B cell (primary cell): ENCODE measurements at regions of chr2 and their contacts with region 1.

Region 1: DNA sequence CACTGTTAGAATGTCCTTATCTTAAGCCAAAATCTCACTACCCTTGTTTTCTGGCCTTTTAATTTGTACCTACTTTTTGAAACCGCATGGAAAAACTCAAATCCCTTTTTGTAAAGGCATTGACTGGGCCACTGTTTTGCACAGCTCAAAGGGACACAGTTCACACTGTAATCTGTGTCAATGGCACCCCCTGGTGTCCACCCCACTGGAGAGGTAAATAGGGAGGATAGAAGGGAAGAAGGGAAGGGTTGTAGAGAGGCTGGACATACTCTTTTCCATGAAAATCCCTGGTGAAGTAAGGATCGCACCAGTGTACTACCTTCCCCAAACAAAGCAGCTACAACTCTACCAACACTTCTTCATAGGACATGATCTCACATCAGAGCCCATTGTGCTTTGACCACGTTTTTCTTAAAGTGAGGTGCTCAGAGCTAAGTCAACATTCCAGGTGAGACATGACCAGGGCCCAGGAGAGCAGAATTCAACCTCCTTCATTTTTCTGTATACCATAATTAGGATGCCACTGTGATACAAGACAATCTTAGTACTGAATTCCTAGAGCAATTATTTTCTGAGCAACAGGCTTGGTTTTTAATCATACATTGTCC is 92.4 kb upstream of the RMDN2 start:
- DNase-seq: peak; percentile 82
- ATAC-seq: peak; percentile 94
- H3K4me3 ChIP-seq: no peak overlapping the region
- H3K4me3 Mint-ChIP-seq: no peak overlapping the region
- H3K27ac ChIP-seq: no peak overlapping the region
- H3K27ac Mint-ChIP-seq: no peak overlapping the region
- H3K4me1 ChIP-seq: no peaks in the 10 kb centered on the region
- H3K4me1 Mint-ChIP-seq: peaks cover 2% of the 10 kb centered on the region
- H3K27me3 ChIP-seq: no peaks in the 10 kb centered on the region
- H3K27me3 Mint-ChIP-seq: no peaks in the 10 kb centered on the region
- CTCF ChIP-seq: peak; percentile 93

Region 2: DNA sequence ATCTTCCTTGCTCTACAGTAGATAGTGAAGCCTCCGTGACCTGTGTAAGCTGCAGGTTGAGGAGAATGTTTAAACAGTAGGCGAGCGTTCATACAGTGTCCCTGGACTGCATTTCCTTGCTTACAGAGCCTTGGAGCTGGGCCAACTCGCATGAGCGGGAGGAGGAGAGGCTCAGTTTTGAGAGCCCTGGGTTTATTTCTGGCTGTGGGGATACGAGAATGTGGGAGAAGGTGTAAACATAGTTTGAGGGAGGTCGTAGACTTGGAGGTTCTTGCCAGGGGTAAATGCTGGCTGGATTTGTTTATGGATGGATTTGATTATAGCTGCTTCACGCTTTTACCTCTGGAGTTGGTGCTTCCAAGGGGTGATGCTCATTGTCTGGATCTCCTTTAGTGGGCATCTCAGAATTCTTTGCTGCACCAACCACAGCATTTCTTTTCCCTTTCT is 1456.4 kb before region 1 on chr2:
- CTCF ChIA-PET with region 1: no interaction called
- POLR2A ChIA-PET with region 1: no interaction called
- intact Hi-C with region 1: no loop called
- DNase-seq: no peak
- ATAC-seq: no peak
- H3K4me3 ChIP-seq: no peak overlapping the region
- H3K4me3 Mint-ChIP-seq: no peak overlapping the region
- H3K27ac ChIP-seq: no peak overlapping the region
- H3K27ac Mint-ChIP-seq: no peak overlapping the region
- H3K4me1 ChIP-seq: peaks cover 0 to 10% of the 10 kb centered on the region in 2 donors
- H3K4me1 Mint-ChIP-seq: no peaks in the 10 kb centered on the region
- H3K27me3 ChIP-seq: no peaks in the 10 kb centered on the region
- H3K27me3 Mint-ChIP-seq: peaks cover 11% of the 10 kb centered on the region
- CTCF ChIP-seq: no peak

Region 3: DNA sequence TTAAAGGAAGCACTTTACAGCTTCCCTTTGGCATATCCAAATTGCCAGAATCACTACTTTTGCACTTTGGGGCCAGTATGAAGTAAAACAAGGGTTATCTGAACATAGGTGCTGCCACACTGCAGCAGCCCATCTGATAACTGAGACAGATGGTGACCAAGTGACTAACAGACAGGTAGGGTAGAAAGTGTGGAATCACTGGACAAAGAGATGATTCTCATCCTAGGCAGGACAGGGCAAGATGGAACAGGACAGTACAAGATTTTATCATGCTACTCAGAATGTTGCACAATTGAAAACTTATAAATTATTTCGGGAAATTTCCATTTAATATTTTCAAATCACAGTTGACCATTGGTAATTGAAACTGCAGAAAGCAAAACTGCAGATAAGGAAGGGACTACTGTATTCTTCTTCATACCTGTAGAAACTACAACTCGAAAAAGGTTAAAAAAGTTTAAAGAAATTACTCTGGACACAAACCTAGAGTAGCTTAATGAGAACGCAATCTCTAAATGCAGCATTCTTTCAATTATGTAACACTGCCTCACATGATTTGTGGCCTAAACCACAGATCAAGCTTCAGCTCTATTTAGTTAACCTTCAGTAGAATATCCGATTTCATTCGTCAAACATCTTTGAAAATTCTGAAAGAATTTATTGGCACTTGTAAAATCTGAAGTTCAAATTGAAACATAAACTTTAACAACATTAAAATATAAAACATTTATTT is 779.9 kb before region 1 on chr2:
- CTCF ChIA-PET with region 1: no interaction called
- POLR2A ChIA-PET with region 1: no interaction called
- intact Hi-C with region 1: no loop called
- DNase-seq: no peak
- ATAC-seq: no peak
- H3K4me3 ChIP-seq: no peak overlapping the region
- H3K4me3 Mint-ChIP-seq: no peak overlapping the region
- H3K27ac ChIP-seq: no peak overlapping the region
- H3K27ac Mint-ChIP-seq: no peak overlapping the region
- H3K4me1 ChIP-seq: no peaks in the 10 kb centered on the region
- H3K4me1 Mint-ChIP-seq: no peaks in the 10 kb centered on the region
- H3K27me3 ChIP-seq: no peaks in the 10 kb centered on the region
- H3K27me3 Mint-ChIP-seq: no peaks in the 10 kb centered on the region
- CTCF ChIP-seq: no peak

Region 4: DNA sequence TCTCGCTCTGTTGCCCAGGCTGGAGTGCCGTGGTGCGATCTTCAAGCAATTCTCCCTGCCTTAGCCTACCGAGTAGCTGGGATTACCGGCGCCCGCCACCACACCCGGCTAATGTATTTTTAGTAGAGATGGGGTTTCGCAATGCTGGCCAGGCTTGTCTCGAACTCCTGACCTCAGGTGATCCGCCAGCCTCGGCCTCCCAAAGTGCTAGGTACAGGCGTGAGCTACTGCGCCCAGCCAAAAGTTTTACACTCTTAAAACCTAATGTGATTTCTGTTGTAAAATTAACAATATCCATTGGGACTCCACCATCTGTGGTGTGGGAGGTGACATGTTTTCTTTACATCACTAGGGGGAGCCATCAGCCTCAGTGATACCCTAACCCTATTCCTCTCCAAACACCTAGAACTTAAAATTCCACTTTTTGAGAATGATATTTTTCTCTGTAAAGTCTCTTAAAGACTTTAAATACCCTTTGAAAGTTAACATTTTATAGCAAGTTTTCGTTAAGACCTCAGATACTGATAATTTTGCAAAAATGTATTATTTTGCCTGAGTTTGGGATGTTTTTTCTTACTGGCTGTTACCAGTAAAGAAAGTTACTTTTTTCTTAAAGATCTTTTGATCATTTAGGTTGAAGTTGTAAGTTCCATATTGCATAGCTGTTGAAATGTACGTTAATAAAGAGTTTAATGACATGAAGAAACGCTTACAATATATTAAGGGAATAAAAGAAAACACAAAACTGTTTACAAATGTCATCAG is 664.3 kb before region 1 on chr2:
- CTCF ChIA-PET with region 1: interaction called, 23 read pairs
- POLR2A ChIA-PET with region 1: no interaction called
- intact Hi-C with region 1: loop called (anchors 1 kb)
- DNase-seq: peak; percentile 59
- ATAC-seq: peak; percentile 64
- H3K4me3 ChIP-seq: no peak overlapping the region
- H3K4me3 Mint-ChIP-seq: no peak overlapping the region
- H3K27ac ChIP-seq: no peak overlapping the region
- H3K27ac Mint-ChIP-seq: no peak overlapping the region
- H3K4me1 ChIP-seq: no peaks in the 10 kb centered on the region
- H3K4me1 Mint-ChIP-seq: peaks cover 2% of the 10 kb centered on the region
- H3K27me3 ChIP-seq: no peaks in the 10 kb centered on the region
- H3K27me3 Mint-ChIP-seq: no peaks in the 10 kb centered on the region
- CTCF ChIP-seq: peak; percentile 83

Region 5: GRCh38 chr2:37376421-37377186 is 456.1 kb before region 1 on chr2:
- CTCF ChIA-PET with region 1: interaction called, 24 read pairs
- POLR2A ChIA-PET with region 1: no interaction called
- intact Hi-C with region 1: no loop called
- DNase-seq: peak; percentile 81
- ATAC-seq: peak; percentile 74
- H3K4me3 ChIP-seq: peak overlapping the region in 4 of 5 experiments; percentile 5 to 36 (median 30)
- H3K4me3 Mint-ChIP-seq: peak overlapping the region; percentile 83
- H3K27ac ChIP-seq: peak overlapping the region; percentile 72 to 74
- H3K27ac Mint-ChIP-seq: peak overlapping the region; percentile 90
- H3K4me1 ChIP-seq: peaks cover 42 to 45% of the 10 kb centered on the region in 2 donors
- H3K4me1 Mint-ChIP-seq: peaks cover 43% of the 10 kb centered on the region
- H3K27me3 ChIP-seq: no peaks in the 10 kb centered on the region
- H3K27me3 Mint-ChIP-seq: no peaks in the 10 kb centered on the region
- CTCF ChIP-seq: no peak

Region 6: DNA sequence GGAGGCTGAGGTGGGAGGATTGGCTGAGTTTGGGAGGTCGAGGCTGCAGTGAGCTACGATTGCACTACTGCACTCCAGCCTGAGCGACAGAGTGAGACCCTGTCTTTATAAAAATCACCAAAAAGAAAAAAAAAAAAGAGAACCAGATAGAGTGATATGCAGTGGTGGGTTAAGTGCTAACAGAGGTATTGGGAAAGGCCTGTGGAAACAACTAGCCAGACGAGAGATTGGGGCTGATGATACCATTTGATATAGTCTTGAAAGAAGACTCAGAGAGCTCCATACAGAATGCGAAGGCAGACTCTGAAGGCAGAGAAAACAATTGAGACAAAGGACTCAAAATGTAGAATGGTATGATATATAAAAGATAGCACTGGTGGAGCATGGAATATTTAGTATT is 295.4 kb before region 1 on chr2:
- CTCF ChIA-PET with region 1: interaction called, 19 read pairs
- POLR2A ChIA-PET with region 1: no interaction called
- intact Hi-C with region 1: no loop called
- DNase-seq: no peak
- ATAC-seq: no peak
- H3K4me3 ChIP-seq: no peak overlapping the region
- H3K4me3 Mint-ChIP-seq: no peak overlapping the region
- H3K27ac ChIP-seq: no peak overlapping the region
- H3K27ac Mint-ChIP-seq: no peak overlapping the region
- H3K4me1 ChIP-seq: no peaks in the 10 kb centered on the region
- H3K4me1 Mint-ChIP-seq: peaks cover 4% of the 10 kb centered on the region
- H3K27me3 ChIP-seq: no peaks in the 10 kb centered on the region
- H3K27me3 Mint-ChIP-seq: peaks cover 6% of the 10 kb centered on the region
- CTCF ChIP-seq: no peak

Region 7: DNA sequence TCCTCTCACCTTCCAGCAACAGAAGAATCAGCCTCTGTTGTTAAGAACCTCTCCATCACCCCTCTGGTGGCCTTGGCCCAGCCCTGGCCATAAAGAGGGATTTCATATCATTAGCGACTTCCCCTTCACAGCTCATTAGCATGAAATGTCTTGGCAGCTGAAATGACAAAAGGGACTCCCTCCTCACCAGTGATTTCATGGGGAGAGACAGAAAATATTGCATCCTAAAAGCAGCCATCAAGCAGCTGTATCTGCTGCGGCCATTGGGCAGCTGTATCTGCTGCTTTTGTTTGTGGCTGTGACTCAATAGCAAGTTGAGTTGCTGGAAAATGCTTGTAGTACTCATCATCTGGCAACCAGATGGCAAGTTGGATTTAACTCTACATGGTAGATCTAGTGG is 13.5 kb before region 1 on chr2:
- CTCF ChIA-PET with region 1: interaction called, 16 read pairs
- POLR2A ChIA-PET with region 1: no interaction called
- intact Hi-C with region 1: no loop called
- DNase-seq: no peak
- ATAC-seq: no peak
- H3K4me3 ChIP-seq: no peak overlapping the region
- H3K4me3 Mint-ChIP-seq: no peak overlapping the region
- H3K27ac ChIP-seq: no peak overlapping the region
- H3K27ac Mint-ChIP-seq: no peak overlapping the region
- H3K4me1 ChIP-seq: peaks cover 7 to 9% of the 10 kb centered on the region in 2 donors
- H3K4me1 Mint-ChIP-seq: peaks cover 8% of the 10 kb centered on the region
- H3K27me3 ChIP-seq: no peaks in the 10 kb centered on the region
- H3K27me3 Mint-ChIP-seq: no peaks in the 10 kb centered on the region
- CTCF ChIP-seq: no peak